Activated T-helper 1 cell treated with anti-CD3 and anti-CD28 coated beads, Interleukin-12 subunit alpha, Interleukin-12 subunit beta, Interleukin-2, Interleukin-4 antibody, amounts not matched to agents 30 ng/mL and 10 ng/mL and 1 ng/mL, durations not matched to agents 14 hours and 24 hours and 36 hours (primary cell): ENCODE measurements at regions of chr14 and their contacts with region 1.

Region 1: GRCh38 chr14:90399541-90400444 is 3.0 kb downstream of the CALM1 start:
- DNase-seq: peak; percentile 79
- H3K4me3 Mint-ChIP-seq: peak overlapping the region; percentile 96
- H3K27ac Mint-ChIP-seq: peak overlapping the region; percentile 73
- H3K4me1 Mint-ChIP-seq: peaks cover 70% of the 10 kb centered on the region
- H3K27me3 Mint-ChIP-seq: peaks cover 2% of the 10 kb centered on the region

Region 2: DNA sequence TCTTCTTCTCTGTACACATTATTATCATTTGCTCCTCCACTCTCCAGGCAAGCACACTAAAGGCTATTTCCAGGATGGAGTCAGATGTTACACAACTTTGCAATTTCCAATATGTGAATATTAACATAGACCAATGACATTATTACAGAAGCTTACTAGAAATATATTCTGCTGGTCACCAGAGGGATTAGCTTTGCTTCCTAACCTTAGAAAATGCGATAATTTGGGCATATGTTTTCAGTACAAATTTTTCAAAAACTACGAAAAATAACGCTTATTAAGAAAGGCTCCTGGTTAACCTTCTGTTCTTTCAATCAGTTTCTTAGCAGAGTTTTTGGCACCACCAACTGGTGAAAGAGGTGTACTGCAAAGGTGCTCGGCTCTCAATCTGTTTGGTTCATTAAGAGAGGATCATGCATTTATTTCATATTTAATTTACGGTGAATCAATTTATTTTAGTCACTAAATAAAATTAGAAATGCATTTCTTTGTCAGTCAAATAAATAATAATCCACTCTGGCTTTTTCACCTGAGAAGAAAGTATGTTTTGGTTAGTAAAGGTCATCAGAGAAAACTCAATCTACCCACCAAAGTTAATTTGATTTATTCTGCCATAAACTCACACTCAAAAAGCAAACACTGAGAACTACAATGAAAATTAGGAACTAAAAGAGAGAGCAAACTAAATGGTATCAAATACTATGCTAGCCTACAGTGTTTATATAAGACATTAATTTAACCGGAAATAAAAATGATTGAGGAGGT is 484.5 kb before region 1 on chr14:
- intact Hi-C with region 1: no loop called
- DNase-seq: peak; percentile 38
- H3K4me3 Mint-ChIP-seq: no peak overlapping the region
- H3K27ac Mint-ChIP-seq: no peak overlapping the region
- H3K4me1 Mint-ChIP-seq: peaks cover 4% of the 10 kb centered on the region
- H3K27me3 Mint-ChIP-seq: peaks cover 12% of the 10 kb centered on the region

Region 3: GRCh38 chr14:90331497-90332435 is 68.0 kb before region 1 on chr14 and contains the start of gene NRDE2:
- intact Hi-C with region 1: loop called (anchors 1 kb)
- DNase-seq: peak; percentile 90
- H3K4me3 Mint-ChIP-seq: peak within 1 kb of the TSS; percentile 93
- H3K27ac Mint-ChIP-seq: peak within 1 kb of the TSS; percentile 88
- H3K4me1 Mint-ChIP-seq: peaks cover 26% of the 10 kb centered on the region
- H3K27me3 Mint-ChIP-seq: peaks cover 24% of the 10 kb centered on the region
- total RNA-seq, gene NRDE2: 22.9 and 24.4 TPM in 2 replicates

Region 4: DNA sequence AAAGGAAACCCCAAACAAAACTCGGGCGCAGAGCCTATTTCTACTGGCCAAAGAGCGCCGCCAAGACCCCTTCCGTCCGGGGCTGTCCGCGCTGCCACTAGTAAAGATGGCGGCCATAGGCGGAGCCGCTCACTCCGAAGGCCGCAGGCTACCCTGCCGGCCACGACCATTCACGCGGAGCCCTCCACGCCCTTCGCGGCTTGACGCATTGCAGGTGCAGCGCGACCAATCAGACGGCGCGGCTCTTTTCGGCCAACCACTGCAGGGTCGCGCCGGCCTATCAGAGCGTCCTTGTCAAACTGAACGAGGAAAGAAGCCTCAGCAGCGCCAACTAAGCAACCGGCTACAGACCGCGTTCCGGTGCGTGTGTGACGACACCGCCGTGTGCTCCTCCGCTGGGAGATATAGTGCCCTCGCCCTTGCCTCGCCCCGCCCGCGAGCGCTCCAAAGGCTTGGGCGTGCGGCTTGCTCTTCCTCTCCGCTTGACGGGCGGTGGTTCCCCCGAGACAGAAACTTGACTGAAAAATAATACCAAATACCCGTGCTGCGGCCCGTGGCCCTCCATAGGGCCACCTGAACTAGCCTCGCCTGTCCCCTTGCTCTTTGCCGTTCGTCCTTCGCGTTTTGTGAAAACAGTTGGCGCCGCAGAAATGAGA is 16.6 kb before region 1 on chr14:
- intact Hi-C with region 1: loop called (anchors 1 kb)
- DNase-seq: peak; percentile 98
- H3K4me3 Mint-ChIP-seq: no peak overlapping the region
- H3K27ac Mint-ChIP-seq: no peak overlapping the region
- H3K4me1 Mint-ChIP-seq: peaks cover 6% of the 10 kb centered on the region
- H3K27me3 Mint-ChIP-seq: peaks cover 1% of the 10 kb centered on the region

Region 5: DNA sequence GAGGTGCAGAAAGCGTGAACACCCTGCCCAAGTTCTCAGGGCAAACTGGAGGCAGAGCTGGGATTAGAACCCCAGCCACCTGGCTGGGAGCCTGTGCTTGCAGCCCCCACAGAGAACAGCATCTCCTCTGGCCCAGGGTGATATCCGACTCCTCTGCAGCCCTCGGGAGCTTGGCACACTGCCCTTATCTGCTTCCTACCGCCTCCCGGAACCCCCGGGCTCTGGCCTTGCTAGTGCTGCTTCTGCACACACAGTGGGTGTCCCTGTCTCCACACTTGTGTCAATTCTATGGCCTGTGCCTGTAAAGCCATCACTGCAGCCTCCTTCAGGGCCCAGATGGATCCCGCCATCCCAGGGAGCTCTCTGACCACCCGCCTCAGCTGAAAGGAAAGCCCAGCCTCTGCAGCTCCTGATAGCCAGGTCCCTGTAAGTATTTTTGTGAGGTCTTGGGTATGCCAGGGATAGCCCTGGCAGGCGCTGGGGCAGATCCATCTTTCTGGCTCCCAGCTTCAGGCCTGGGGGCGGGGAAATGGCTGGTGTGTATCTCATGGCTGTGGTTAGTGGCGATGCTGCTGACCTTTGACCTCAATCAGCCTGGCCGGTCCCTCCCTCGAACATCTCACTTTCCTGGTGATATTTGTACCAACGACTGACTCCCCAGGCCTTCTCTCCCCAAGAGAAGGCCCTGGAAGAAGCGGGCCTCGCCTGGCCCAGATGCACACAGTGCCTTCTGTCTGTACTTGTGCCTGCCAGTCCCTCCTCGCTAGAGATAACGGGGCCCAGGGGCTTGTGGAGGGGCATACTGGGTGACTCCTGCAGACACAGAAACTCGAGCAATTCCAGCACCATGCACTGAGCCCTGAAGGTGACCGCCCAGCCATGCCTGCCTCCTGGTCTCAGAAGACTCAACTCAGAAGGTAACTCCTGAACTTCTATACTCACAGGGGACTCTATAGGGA is 180.9 kb after region 1 on chr14:
- intact Hi-C with region 1: no loop called
- DNase-seq: no peak
- H3K4me3 Mint-ChIP-seq: no peak overlapping the region
- H3K27ac Mint-ChIP-seq: no peak overlapping the region
- H3K4me1 Mint-ChIP-seq: no peaks in the 10 kb centered on the region
- H3K27me3 Mint-ChIP-seq: no peaks in the 10 kb centered on the region

Region 6: GRCh38 chr14:90677484-90678050 is 277.8 kb after region 1 on chr14:
- intact Hi-C with region 1: loop called (anchors 5 kb)
- DNase-seq: no peak
- H3K4me3 Mint-ChIP-seq: peak overlapping the region; percentile 23
- H3K27ac Mint-ChIP-seq: peak overlapping the region; percentile 85
- H3K4me1 Mint-ChIP-seq: peaks cover 36% of the 10 kb centered on the region
- H3K27me3 Mint-ChIP-seq: no peaks in the 10 kb centered on the region

Region 7: GRCh38 chr14:90758028-90758889 is 358.5 kb after region 1 on chr14:
- intact Hi-C with region 1: loop called (anchors 2 kb)
- DNase-seq: peak; percentile 93
- H3K4me3 Mint-ChIP-seq: peak overlapping the region; percentile 74
- H3K27ac Mint-ChIP-seq: peak overlapping the region; percentile 78
- H3K4me1 Mint-ChIP-seq: peaks cover 6% of the 10 kb centered on the region
- H3K27me3 Mint-ChIP-seq: peaks cover 27% of the 10 kb centered on the region